ENCODE measurements at regions of chr5 and their contacts with region 1.

Region 1: DNA sequence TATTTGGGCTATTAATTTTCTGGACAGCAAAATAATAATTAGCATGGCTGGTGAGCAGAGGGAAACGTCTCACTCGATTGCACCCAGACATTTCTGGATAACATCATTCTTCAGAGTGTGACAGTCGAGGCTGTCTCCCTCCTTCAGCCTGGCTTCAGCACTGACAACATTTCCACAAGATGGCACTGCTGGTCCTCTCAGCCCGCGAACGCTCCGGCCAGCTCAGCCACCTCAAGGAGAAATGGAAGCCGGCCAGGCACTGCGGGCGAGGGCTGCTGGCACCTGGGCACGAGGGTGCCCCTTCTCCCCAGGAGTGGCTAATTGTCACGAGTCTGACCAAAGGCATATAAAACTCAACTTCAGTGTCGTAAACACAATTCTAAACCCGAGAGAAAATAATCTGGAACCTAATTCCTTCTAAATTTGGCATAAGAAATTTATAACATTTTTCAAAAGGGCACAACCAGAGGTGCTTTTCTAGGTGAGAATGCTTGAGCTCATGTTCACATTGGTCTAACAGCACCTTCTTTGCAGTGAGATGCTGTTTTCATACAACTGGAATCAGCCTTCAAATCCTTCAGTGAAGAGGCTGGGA is 65.9 kb downstream of the DAP start:
- DNase-seq: peak; percentile 69
- ATAC-seq: peak; percentile 74
- H3K4me3 ChIP-seq: no peak overlapping the region
- H3K27ac ChIP-seq: no peak overlapping the region
- H3K4me1 ChIP-seq: peaks cover 26% of the 10 kb centered on the region
- H3K27me3 ChIP-seq: no peaks in the 10 kb centered on the region
- CTCF ChIP-seq: peak; percentile 85
- POLR2A ChIP-seq: no peak
- RAD21 ChIP-seq: peak; percentile 93

Region 2: DNA sequence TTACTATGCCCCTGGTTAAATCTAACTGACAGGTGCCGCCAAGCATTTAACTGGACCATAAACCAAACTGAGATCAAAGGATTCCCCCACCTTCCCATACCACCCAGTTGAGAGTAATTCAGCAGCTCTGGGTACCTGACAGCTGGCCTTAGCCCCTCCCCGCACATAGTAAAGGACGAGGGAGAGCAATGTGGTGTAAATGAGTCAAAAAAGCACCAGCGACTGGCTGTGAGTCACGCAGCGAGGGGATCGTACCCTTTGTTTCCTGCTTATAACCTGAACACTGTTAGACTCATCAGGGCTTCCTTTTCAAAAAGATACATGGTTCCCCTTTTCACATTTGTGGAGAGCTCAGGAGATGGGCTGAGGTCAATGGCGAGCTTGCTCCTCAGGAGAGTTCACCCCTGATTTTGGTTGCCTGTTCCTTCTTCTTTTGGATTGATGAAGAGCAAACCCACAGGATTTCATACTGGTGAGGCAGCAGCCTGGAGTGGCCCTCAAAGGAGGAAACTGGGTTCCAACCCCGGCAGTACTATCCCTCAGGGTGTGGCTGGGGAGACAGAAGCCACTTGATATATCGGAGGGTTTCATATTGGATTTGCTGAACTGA is 59.8 kb before region 1 on chr5:
- CTCF ChIA-PET with region 1: no interaction called
- POLR2A ChIA-PET with region 1: no interaction called
- dilution Hi-C with region 1: no loop called
- in situ Hi-C with region 1: no loop called
- intact Hi-C with region 1: no loop called
- DNase-seq: peak; percentile 80
- ATAC-seq: peak; percentile 79
- H3K4me3 ChIP-seq: no peak overlapping the region
- H3K27ac ChIP-seq: no peak overlapping the region; the same call in 1 of the 2 replicates
- H3K4me1 ChIP-seq: peaks cover 9% of the 10 kb centered on the region
- H3K27me3 ChIP-seq: no peaks in the 10 kb centered on the region
- CTCF ChIP-seq: no peak
- POLR2A ChIP-seq: no peak
- RAD21 ChIP-seq: no peak

Region 3: DNA sequence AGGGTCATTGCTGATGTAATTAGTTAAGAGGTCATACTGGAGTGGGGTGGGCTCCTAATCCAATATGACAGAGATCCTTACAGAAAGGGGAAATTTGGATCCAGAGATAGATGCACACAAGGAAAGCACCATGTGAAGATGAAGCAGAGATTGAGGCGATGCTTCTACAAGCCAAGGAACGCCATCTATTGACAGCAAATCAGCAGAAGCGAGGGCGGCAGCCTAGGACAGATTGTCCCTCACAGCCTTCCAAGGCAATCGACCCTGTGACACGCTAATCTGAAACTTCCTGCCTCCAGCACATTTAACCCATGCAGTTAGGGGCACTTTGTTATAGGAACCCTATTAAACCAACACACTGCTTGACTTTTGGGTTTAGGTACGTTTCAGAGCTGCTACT is 351.0 kb after region 1 on chr5:
- CTCF ChIA-PET with region 1: no interaction called
- POLR2A ChIA-PET with region 1: no interaction called
- dilution Hi-C with region 1: no loop called
- in situ Hi-C with region 1: no loop called
- intact Hi-C with region 1: loop called (anchors 5 kb)
- DNase-seq: peak; percentile 18
- ATAC-seq: peak; percentile 77
- H3K4me3 ChIP-seq: no peak overlapping the region
- H3K27ac ChIP-seq: no peak overlapping the region
- H3K4me1 ChIP-seq: no peaks in the 10 kb centered on the region
- H3K27me3 ChIP-seq: peaks cover 7% of the 10 kb centered on the region
- CTCF ChIP-seq: peak; percentile 37; the same call in 1 of the 2 replicates
- POLR2A ChIP-seq: no peak
- RAD21 ChIP-seq: peak; percentile 46

Region 4: GRCh38 chr5:11182441-11183268 is 487.5 kb after region 1 on chr5:
- CTCF ChIA-PET with region 1: interaction called, 3 read pairs
- POLR2A ChIA-PET with region 1: no interaction called
- dilution Hi-C with region 1: no loop called
- in situ Hi-C with region 1: loop called (anchors 10 kb)
- intact Hi-C with region 1: loop called (anchors 1 kb)
- DNase-seq: peak; percentile 47
- ATAC-seq: peak; percentile 69
- H3K4me3 ChIP-seq: no peak overlapping the region
- H3K27ac ChIP-seq: no peak overlapping the region
- H3K4me1 ChIP-seq: no peaks in the 10 kb centered on the region
- H3K27me3 ChIP-seq: no peaks in the 10 kb centered on the region
- CTCF ChIP-seq: peak; percentile 63
- POLR2A ChIP-seq: no peak
- RAD21 ChIP-seq: peak; percentile 72